H1 (cell line): ENCODE measurements at regions of chr11 and their contacts with region 1.

Region 1: DNA sequence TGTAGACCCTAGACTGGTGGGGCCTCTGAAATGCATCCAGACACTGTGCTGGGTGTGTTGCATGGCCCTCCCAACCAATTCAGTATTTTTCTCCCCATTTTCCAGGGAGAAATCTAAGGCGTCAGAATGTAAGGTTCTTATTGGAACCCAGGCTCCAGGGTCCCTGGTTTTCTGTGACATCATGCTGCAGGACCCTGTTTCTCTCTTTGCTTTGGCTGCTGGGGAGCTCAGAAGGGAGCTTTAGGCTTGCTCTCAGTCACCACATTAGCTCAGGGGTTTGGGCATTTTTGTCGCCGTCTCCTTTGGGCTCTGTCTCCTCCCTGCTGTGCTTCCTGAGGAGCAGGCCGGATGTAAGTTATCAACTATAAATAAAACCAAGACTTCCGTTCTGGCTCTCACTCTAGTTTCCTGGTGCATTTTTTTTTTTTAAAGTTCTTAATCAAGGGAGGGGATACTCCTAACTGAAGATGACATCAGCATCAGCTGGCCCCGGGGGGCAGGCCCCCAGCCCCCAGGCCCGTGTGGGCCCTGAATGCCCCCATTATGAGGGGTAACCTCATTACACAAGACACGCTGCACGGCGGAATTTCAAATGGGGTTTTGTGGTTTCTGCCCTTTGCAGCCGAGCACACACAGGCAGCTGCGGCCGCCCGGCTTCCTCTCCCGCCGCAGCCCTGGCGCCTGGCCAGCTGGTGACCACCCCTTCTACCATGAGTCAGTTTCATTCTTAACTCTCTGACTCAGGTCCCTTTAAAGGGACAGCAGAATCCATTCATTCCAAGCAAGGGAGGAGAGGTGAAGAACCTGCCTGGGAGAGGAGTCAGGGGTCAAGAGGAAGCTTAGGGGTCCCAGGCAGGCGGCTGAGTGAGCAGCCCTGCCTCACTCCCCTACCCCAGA is 3.2 kb downstream of the MYEOV start:
- DNase-seq: peak in 1 of 2 experiments; percentile 31
- H3K4me3 ChIP-seq: no peak overlapping the region
- H3K27ac ChIP-seq: no peak overlapping the region
- H3K4me1 ChIP-seq: peaks cover 0 to 2% (median under 1%) of the 10 kb centered on the region in 4 experiments; a peak in 2 of 7 replicates
- H3K27me3 ChIP-seq: no peaks in the 10 kb centered on the region; a peak in 1 of 7 replicates
- CTCF ChIP-seq: no peak
- EP300 ChIP-seq: no peak
- POLR2A ChIP-seq: no peak
- RAD21 ChIP-seq: no peak

Region 2: GRCh38 chr11:69240332-69241074 is 56.6 kb before region 1 on chr11:
- CTCF ChIA-PET with region 1: interaction called, 10 read pairs
- POLR2A ChIA-PET with region 1: no interaction called
- DNase-seq: no peak
- H3K4me3 ChIP-seq: no peak overlapping the region
- H3K27ac ChIP-seq: no peak overlapping the region
- H3K4me1 ChIP-seq: no peaks in the 10 kb centered on the region
- H3K27me3 ChIP-seq: no peaks in the 10 kb centered on the region
- CTCF ChIP-seq: peak; percentile 48 to 70 (median 60)
- EP300 ChIP-seq: no peak
- POLR2A ChIP-seq: no peak
- RAD21 ChIP-seq: peak; percentile 48 to 66

Region 3: GRCh38 chr11:69309631-69310280 is 12.6 kb after region 1 on chr11:
- CTCF ChIA-PET with region 1: interaction called, 13 read pairs
- POLR2A ChIA-PET with region 1: interaction called, 5 read pairs
- DNase-seq: no peak
- H3K4me3 ChIP-seq: no peak overlapping the region
- H3K27ac ChIP-seq: no peak overlapping the region
- H3K4me1 ChIP-seq: peaks cover 0 to 3% (median 1%) of the 10 kb centered on the region in 4 experiments; a peak in 1 of 7 replicates
- H3K27me3 ChIP-seq: no peaks in the 10 kb centered on the region
- CTCF ChIP-seq: no peak
- EP300 ChIP-seq: no peak
- POLR2A ChIP-seq: no peak
- RAD21 ChIP-seq: no peak

Region 4: DNA sequence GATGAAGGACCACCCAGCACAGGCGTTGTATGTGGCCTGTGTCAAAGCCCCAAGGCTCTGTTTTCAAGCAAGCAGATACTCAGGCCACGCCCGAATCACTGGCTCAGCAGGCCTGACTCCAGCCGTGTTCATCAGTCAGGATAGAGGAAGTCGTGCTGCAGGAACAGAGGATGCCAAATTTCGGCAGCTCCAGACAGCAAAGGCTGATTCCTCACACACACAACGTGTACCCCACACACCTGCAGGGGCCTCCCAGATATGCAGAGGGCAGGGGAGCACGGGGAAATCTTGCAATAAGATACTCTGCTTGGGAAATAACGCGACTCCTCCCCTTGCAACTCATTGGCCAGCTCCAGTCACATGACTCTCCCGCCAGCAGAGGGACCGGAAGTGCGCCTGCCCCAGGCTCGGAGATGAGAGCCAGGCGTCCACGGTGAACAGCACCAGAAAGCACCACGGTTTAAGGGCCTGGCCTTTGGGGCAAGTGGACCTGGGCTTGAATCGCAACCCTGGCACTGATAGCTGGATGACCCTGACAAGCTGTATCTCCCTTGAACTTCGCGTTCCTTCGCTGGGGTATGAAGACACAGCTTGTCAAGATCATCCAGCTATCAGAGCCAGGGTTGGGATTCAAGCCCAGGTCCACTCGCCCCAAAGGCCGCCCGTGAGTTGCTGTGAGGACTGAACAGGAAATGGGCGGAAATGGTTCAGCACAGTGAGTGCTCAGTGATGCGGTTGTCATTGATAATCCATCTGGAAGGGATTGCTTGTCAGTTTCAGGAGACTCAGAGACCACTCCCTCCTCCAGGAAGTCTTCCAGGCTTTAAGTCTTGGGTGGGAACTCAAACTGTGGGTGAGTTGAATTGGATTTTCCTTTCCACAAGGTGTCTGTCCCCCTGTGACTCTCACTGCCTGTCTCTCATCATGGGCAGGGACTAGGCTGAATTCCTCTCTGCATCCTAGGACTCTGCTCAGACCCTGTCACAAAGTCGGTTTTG is 85.3 kb after region 1 on chr11:
- CTCF ChIA-PET with region 1: interaction called, 13 read pairs
- POLR2A ChIA-PET with region 1: no interaction called
- DNase-seq: peak in 1 of 2 experiments; percentile 63
- H3K4me3 ChIP-seq: no peak overlapping the region
- H3K27ac ChIP-seq: no peak overlapping the region
- H3K4me1 ChIP-seq: peaks cover 0 to 7% (median 0%) of the 10 kb centered on the region in 4 experiments; a peak in 2 of 7 replicates
- H3K27me3 ChIP-seq: no peaks in the 10 kb centered on the region
- CTCF ChIP-seq: no peak
- EP300 ChIP-seq: no peak
- POLR2A ChIP-seq: no peak
- RAD21 ChIP-seq: no peak

Region 5: GRCh38 chr11:69662017-69662698 is 365.0 kb after region 1 on chr11:
- CTCF ChIA-PET with region 1: interaction called, 11 read pairs
- POLR2A ChIA-PET with region 1: no interaction called
- DNase-seq: no peak
- H3K4me3 ChIP-seq: no peak overlapping the region
- H3K27ac ChIP-seq: no peak overlapping the region
- H3K4me1 ChIP-seq: peaks cover 5 to 16% (median 13%) of the 10 kb centered on the region in 4 experiments
- H3K27me3 ChIP-seq: no peaks in the 10 kb centered on the region; a peak in 1 of 7 replicates
- CTCF ChIP-seq: peak; percentile 47 to 74 (median 54)
- EP300 ChIP-seq: no peak
- POLR2A ChIP-seq: no peak
- RAD21 ChIP-seq: peak; percentile 53 to 56